Mammary epithelial cell (primary cell): ENCODE measurements at regions of chr3 and their contacts with region 1.

Region 1: DNA sequence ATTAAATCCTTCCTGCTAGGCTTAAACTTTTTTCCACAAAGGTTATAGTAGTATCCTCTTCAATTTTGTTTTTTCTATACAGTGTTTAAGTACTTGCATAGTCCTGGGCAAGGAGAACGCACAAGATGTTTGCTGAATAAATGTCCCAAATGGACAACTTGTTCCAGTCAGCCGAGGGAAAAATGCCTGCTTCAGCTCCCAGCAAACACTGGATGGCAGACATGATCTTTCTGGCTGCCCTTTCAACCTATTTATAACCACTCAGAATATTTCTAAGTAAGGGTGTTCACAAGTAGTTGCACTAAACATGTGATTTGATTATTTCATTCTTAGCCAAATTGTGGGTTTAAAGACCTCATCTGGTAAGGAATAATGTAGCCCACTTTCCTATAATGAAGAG is 29.8 kb downstream of the GNB4 start:
- DNase-seq: peak; percentile 15
- H3K4me3 ChIP-seq: no peak overlapping the region
- H3K27ac ChIP-seq: no peak overlapping the region
- H3K4me1 ChIP-seq: no peaks in the 10 kb centered on the region
- H3K27me3 ChIP-seq: no peaks in the 10 kb centered on the region
- CTCF ChIP-seq: peak; percentile 37 to 57

Region 2: GRCh38 chr3:179375091-179375999 is 46.2 kb before region 1 on chr3:
- CTCF ChIA-PET with region 1: no interaction called
- dilution Hi-C with region 1: loop called (anchors 5 kb)
- in situ Hi-C with region 1: no loop called
- intact Hi-C with region 1: no loop called
- DNase-seq: no peak
- H3K4me3 ChIP-seq: no peak overlapping the region
- H3K27ac ChIP-seq: no peak overlapping the region
- H3K4me1 ChIP-seq: no peaks in the 10 kb centered on the region
- H3K27me3 ChIP-seq: no peaks in the 10 kb centered on the region
- CTCF ChIP-seq: no peak

Region 3: DNA sequence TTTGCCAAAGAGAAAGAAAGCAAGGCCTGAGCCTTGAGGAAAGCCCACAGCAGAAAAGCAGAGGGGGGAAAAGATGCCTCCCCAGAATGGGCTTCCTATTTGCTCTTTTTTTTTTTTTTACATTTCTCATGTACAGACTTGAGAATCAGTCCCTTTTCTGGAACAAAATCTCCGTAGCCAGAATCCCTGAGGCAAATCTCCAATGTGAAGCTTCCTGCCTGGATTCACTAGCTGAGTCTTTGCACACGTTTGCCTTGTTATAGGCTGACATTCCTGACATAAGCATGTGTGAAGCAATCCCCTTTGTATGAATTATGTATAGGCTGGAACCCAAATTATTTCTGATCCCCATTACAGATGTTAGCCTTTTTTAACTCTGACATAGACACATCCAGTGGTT is 89.0 kb after region 1 on chr3:
- CTCF ChIA-PET with region 1: no interaction called
- dilution Hi-C with region 1: no loop called
- in situ Hi-C with region 1: no loop called
- intact Hi-C with region 1: no loop called
- DNase-seq: peak; percentile 6
- H3K4me3 ChIP-seq: no peak overlapping the region
- H3K27ac ChIP-seq: no peak overlapping the region
- H3K4me1 ChIP-seq: no peaks in the 10 kb centered on the region
- H3K27me3 ChIP-seq: peaks cover 4% of the 10 kb centered on the region
- CTCF ChIP-seq: no peak